H1 (cell line): ENCODE measurements at regions of chr3 and their contacts with region 1.

Region 1: DNA sequence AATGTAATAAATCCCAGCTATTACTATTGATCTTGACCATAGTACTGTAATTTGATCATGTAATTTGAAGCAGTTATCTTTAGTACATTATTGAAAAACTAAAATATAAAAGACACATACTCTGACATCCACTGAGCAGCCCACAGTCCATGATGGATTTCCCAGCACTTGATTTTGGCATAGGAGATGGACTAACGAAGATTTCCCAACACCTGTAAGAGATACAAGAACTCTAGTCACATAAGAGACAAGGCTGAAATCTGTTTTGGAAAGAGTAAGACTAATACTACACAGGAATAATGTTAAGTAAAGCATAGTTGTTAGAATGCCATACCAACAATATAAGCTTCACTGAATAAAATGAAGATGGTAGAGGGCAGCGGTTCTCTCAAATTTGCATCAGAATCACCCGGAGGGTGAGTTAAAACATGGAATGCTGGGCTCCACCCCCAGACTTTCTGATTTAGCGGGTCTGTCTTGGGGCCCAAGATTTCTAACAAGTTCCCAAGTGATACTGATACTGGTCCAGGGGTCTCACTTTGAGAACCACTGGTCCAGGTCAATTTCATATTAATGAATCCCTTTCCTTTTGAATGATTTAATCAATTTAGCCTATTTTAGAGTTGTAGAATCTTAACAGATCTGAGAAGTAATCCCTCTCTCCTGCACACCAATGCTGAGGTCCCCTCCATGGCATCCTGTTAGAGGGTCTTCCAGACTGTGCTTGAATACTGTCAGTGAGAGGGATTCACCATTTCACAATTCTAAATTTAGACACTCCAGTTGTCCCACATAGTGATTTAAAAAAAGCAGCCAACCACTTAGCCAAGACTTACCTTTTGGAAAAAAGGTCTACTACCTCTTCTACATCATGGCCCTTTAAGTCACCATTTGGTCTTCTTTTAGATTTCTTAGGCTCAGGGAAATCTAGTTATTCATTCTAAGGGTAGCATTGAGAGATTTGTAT is 11.5 kb downstream of the RABL3 start:
- DNase-seq: no peak
- H3K4me3 ChIP-seq: peak overlapping the region in 1 of 4 experiments; percentile 17; a peak in 1 of 8 replicates
- H3K27ac ChIP-seq: no peak overlapping the region
- H3K4me1 ChIP-seq: peaks cover 0 to 5% (median 2%) of the 10 kb centered on the region in 4 experiments; a peak in 3 of 7 replicates
- H3K27me3 ChIP-seq: no peaks in the 10 kb centered on the region
- CTCF ChIP-seq: no peak
- EP300 ChIP-seq: no peak
- POLR2A ChIP-seq: no peak
- RAD21 ChIP-seq: no peak

Region 2: DNA sequence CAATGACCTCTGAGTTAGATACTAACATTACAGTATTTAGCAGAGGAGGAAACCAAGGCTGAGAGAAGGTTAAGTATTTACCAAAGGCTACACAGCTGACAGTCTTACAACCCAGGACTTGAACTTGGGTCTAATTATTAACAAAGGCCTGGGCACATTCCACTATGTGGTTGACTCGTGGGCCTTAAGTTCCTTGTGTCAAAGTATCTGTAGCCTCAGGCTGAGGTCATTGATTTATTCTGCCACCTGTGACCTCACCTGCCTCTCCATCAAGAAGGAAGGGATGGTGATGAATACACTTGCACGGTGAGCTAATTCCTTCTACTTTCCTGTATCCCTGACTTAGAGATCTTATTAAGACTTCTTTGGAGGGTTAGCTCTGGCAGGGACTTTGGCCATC is 361.9 kb before region 1 on chr3:
- CTCF ChIA-PET with region 1: no interaction called
- POLR2A ChIA-PET with region 1: no interaction called
- DNase-seq: no peak
- H3K4me3 ChIP-seq: no peak overlapping the region
- H3K27ac ChIP-seq: no peak overlapping the region
- H3K4me1 ChIP-seq: no peaks in the 10 kb centered on the region
- H3K27me3 ChIP-seq: no peaks in the 10 kb centered on the region
- CTCF ChIP-seq: no peak
- EP300 ChIP-seq: no peak
- POLR2A ChIP-seq: no peak
- RAD21 ChIP-seq: no peak

Region 3: DNA sequence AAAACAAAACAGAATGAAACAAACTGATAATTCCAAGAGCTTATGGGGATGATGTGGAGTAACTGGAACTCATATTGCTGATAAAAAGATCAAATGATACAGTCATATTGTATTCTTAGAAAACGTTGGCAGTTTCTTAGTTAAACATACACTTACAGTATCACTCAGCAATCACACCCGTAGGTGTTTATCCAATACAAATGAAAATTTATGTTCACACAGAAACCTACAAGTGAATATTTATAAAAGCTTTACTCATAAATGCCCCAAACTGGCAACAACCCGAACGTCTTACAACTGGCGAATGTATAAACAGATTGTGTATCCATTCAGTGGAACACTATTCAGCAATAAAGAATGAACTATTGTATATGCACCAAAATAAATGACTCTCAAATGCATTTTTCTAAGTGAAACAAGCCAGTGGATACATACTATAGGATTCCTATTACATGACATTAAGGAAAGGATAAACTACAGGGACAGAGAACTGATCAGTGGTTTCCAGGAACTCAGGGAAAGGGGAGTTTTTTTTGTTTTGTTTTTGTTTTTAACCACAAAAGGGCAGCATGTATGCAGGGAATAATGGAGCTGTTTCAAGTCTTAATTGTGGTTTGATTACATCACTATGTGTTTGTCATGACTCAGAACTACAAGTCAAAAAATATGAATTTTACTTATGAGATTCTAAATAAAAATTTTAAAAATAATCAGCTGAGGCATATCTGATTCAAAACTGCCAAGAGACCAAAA is 206.5 kb before region 1 on chr3:
- CTCF ChIA-PET with region 1: no interaction called
- POLR2A ChIA-PET with region 1: no interaction called
- DNase-seq: no peak
- H3K4me3 ChIP-seq: no peak overlapping the region
- H3K27ac ChIP-seq: no peak overlapping the region
- H3K4me1 ChIP-seq: no peaks in the 10 kb centered on the region
- H3K27me3 ChIP-seq: no peaks in the 10 kb centered on the region
- CTCF ChIP-seq: no peak
- EP300 ChIP-seq: no peak
- POLR2A ChIP-seq: no peak
- RAD21 ChIP-seq: no peak

Region 4: GRCh38 chr3:120637851-120638559 is 92.9 kb before region 1 on chr3:
- CTCF ChIA-PET with region 1: no interaction called
- POLR2A ChIA-PET with region 1: no interaction called
- DNase-seq: no peak
- H3K4me3 ChIP-seq: no peak overlapping the region
- H3K27ac ChIP-seq: no peak overlapping the region
- H3K4me1 ChIP-seq: no peaks in the 10 kb centered on the region
- H3K27me3 ChIP-seq: no peaks in the 10 kb centered on the region
- CTCF ChIP-seq: no peak
- EP300 ChIP-seq: no peak
- POLR2A ChIP-seq: no peak
- RAD21 ChIP-seq: no peak

Region 5: GRCh38 chr3:120742198-120742849 is 11.5 kb after region 1 on chr3 and contains the starts of genes GTF2E1 and RABL3:
- CTCF ChIA-PET with region 1: no interaction called
- POLR2A ChIA-PET with region 1: interaction called, 12 read pairs
- DNase-seq: peak; percentile 98
- H3K4me3 ChIP-seq: peak within 1 kb of the TSS; percentile 92 to 97 (median 94)
- H3K27ac ChIP-seq: peak within 1 kb of the TSS; percentile 100
- H3K4me1 ChIP-seq: peaks cover 3 to 11% (median 7%) of the 10 kb centered on the region in 4 experiments; a peak in 6 of 7 replicates
- H3K27me3 ChIP-seq: no peaks in the 10 kb centered on the region
- CTCF ChIP-seq: no peak
- EP300 ChIP-seq: no peak
- POLR2A ChIP-seq: peak; percentile 83 to 97
- RAD21 ChIP-seq: no peak
- total RNA-seq, gene GTF2E1: 64.4 and 73.3 TPM in 2 replicates
- total RNA-seq, gene RABL3: 18.5 and 19.2 TPM in 2 replicates